ENCODE measurements at regions of chr16 and their contacts with region 1.

Region 1: GRCh38 chr16:56199164-56199563 is 7.9 kb downstream of the GNAO1 start:
- DNase-seq: no peak

Region 2: DNA sequence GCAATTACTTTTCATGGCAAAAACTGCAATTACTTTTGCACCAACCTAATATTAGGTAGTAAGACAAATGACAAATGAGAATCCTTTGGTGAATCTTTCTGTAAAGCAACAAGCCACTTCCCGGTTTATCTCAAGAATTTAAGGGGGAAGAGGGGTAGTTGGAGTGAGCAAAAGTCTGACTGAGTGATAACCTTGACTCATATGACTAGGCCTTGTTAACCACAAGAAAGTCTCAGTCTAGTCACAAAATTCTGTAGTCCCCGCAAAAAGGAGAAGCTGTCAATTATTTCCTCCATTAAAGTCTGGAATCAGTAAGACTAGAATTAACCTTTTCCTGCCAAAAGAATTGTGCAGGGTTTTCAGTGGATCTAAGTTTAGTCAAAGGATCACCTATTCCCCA is 80.0 kb before region 1 on chr16:
- intact Hi-C with region 1: no loop called
- DNase-seq: no peak

Region 3: GRCh38 chr16:56237451-56237930 is 38.3 kb after region 1 on chr16:
- intact Hi-C with region 1: loop called (anchors 5 kb)
- DNase-seq: peak in 1 of 10 donors; percentile 64